CD4-positive, alpha-beta T cell (primary cell): ENCODE measurements at regions of chr21 and their contacts with region 1.

Region 1: DNA sequence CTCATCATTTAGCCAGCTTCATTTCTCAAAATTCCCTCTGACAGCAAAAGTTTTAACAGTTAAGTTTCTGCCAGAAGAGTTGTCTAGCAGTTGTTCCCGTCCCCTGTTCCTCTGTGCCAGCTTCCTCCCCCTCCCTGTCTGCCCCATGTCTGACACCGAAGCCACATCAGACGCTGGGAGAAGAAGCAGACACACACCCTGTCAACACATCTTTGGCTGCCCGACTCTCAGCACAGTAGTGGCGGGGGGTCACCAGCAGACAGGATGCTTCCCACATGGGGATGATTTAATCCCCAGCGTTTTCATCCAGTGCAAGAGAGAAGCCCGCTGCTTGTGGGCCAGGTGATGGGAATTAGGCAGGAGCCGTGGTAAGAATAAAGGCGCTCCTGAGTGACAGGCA is 379.4 kb upstream of the RUNX1 start:
- DNase-seq: peak; percentile 18 to 75 (median 59)
- ATAC-seq: peak; percentile 97
- H3K4me3 ChIP-seq: peak overlapping the region; percentile 11
- H3K4me3 Mint-ChIP-seq: peak overlapping the region; percentile 25
- H3K27ac ChIP-seq: no peak overlapping the region
- H3K27ac Mint-ChIP-seq: peak overlapping the region; percentile 70
- H3K4me1 ChIP-seq: peaks cover 11% of the 10 kb centered on the region
- H3K4me1 Mint-ChIP-seq: peaks cover 25% of the 10 kb centered on the region
- H3K27me3 ChIP-seq: peaks cover 3 to 4% of the 10 kb centered on the region in 2 experiments
- H3K27me3 Mint-ChIP-seq: peaks cover 4% of the 10 kb centered on the region
- CTCF ChIP-seq: no peak

Region 2: GRCh38 chr21:35508139-35508888 is 79.8 kb after region 1 on chr21:
- CTCF ChIA-PET with region 1: no interaction called
- POLR2A ChIA-PET with region 1: interaction called, 5 read pairs
- intact Hi-C with region 1: loop called in 1 of 2 experiments (anchors 10 kb)
- DNase-seq: peak in 3 of 14 experiments; percentile 10 to 53 (median 42)
- ATAC-seq: no peak
- H3K4me3 ChIP-seq: no peak overlapping the region
- H3K4me3 Mint-ChIP-seq: no peak overlapping the region
- H3K27ac ChIP-seq: no peak overlapping the region
- H3K27ac Mint-ChIP-seq: peak overlapping the region; percentile 69
- H3K4me1 ChIP-seq: peaks cover 19% of the 10 kb centered on the region
- H3K4me1 Mint-ChIP-seq: peaks cover 69% of the 10 kb centered on the region
- H3K27me3 ChIP-seq: no peaks in the 10 kb centered on the region
- H3K27me3 Mint-ChIP-seq: no peaks in the 10 kb centered on the region
- CTCF ChIP-seq: no peak

Region 3: GRCh38 chr21:35559128-35559828 is 130.8 kb after region 1 on chr21:
- CTCF ChIA-PET with region 1: no interaction called
- POLR2A ChIA-PET with region 1: no interaction called
- intact Hi-C with region 1: loop called in 1 of 2 experiments (anchors 10 kb)
- DNase-seq: no peak
- ATAC-seq: no peak
- H3K4me3 ChIP-seq: no peak overlapping the region
- H3K4me3 Mint-ChIP-seq: no peak overlapping the region
- H3K27ac ChIP-seq: no peak overlapping the region
- H3K27ac Mint-ChIP-seq: no peak overlapping the region
- H3K4me1 ChIP-seq: no peaks in the 10 kb centered on the region
- H3K4me1 Mint-ChIP-seq: no peaks in the 10 kb centered on the region
- H3K27me3 ChIP-seq: peaks cover 5% of the 10 kb centered on the region in 2 experiments
- H3K27me3 Mint-ChIP-seq: peaks cover 3% of the 10 kb centered on the region
- CTCF ChIP-seq: no peak